ENCODE measurements at regions of chr11 and their contacts with region 1.

Region 1: DNA sequence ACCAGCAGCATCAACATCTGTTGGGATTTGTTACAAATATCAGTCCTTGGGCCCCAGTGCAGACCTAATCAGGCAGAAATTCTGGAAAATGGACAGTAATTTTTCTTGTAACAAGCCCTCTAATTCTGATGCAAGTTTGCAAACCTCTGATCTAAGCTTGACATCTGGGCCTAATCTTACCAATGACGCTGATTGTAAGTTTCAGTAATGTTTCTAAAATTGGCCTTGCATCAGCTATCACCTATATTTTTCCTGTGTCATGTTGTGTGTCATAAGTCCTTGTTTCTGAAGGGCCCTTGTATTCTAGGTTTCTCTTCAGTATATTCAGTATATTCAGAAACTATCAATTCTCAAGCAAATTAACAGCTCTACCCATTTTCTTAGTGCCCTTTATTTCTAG is 36.4 kb downstream of the ZNF215 start:
- DNase-seq: no peak
- H3K4me3 ChIP-seq: no peak overlapping the region
- CTCF ChIP-seq: no peak

Region 2: DNA sequence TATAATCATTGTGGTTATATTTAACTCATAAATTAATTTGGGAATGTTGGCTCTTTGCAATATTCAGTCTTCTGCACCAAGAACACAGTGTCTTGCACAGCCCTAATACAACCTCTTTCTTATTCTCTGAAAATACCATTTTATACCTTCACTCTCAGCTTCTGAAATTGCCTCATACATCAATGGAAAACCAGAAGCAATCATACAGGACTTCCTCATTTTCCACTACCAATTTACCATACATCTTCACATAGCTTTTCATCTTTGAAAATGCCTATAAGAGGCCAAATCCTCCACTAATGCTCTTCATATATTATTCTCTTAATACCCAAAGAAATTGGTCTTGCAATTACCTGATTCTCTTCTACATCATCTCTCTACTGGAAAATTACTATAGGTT is 184.2 kb before region 1 on chr11:
- in situ Hi-C with region 1: no loop called
- DNase-seq: no peak
- H3K4me3 ChIP-seq: no peak overlapping the region
- CTCF ChIP-seq: no peak

Region 3: GRCh38 chr11:6992457-6993417 is 30.1 kb after region 1 on chr11:
- in situ Hi-C with region 1: loop called (anchors 5 kb)
- DNase-seq: peak; percentile 69
- H3K4me3 ChIP-seq: no peak overlapping the region
- CTCF ChIP-seq: no peak